ENCODE measurements at regions of chr3 and their contacts with region 1.

Region 1: GRCh38 chr3:160163229-160163878 is 61.9 kb upstream of the C3orf80 start:
- DNase-seq: no peak

Region 2: DNA sequence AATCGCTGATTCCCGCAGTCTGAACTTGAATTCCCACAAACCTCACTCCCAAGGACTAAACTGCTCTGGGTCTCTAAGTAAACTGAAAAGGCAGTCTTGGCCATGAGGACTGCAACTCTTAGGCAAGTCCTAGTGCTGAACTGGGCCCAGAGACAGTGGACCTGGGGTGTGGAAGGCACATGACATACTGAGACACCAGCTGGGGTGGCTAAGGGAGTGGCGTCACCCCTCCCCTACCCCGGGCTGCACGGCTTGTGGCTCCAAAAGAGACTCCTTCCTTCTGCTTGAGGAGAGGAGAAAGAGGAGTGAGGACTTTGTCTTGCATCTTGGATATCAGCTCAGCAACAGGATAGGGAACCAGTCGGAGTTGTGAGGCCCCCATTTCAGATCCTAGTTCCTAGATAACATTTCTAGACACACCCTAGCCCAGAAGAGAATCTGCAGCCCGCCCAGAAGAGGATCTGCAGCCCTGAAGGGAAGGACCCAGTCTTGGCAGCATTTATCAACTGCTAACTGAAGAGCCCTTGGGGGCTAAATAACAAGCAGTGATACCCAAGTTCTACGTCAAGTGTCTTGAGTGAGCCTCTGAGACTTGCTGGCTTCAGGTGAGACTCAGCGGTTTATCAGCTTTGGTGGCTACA is 48.9 kb before region 1 on chr3:
- intact Hi-C with region 1: no loop called
- DNase-seq: peak in 1 of 10 donors; percentile 31

Region 3: GRCh38 chr3:160343132-160343531 is 179.8 kb after region 1 on chr3:
- intact Hi-C with region 1: loop called (anchors 1 kb)
- DNase-seq: no peak

Region 4: DNA sequence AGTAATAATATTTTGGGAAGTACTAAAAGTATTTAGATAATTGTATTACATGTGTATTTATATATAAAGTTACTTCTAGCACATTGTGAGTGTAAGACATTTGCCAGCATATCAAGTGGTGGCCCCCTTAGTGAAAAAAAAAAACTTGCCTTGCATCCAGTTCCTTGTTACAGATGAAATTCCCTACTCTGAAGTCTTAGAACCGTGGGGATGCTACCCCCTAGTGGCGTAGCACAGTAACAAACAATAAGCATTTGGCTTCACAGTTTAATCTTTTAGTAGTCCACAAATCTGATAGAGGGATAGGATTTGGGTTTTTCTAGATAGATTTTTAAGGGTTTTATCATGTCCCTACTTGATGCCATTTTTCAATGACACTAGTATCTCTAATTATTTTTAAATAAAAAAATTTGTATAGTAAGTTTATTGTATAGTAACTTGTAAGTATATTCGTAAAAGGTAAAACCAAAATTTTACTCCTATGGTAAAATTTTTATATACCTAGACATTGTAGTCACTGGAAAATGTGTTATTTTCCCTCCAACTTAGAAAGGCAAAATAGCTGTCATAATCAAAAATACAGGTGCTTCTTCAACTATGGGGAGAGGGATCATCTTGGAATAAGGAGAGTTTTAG is 250.4 kb after region 1 on chr3:
- intact Hi-C with region 1: loop called (anchors 5 kb)
- DNase-seq: peak in 7 of 10 donors; percentile 35 to 89 (median 67)